Activated CD8-positive, alpha-beta T cell treated with anti-CD3 and anti-CD28 coated beads, Interleukin-2, amount 10 ng/mL, durations not matched to agents 7 days and 5 days (primary cell): ENCODE measurements at regions of chr1 and their contacts with region 1.

Region 1: GRCh38 chr1:227563324-227564201 is at the start of gene ZNF678:
- DNase-seq: peak; percentile 90
- ATAC-seq: peak; percentile 91
- H3K4me3 Mint-ChIP-seq: peak within 1 kb of the TSS; percentile 93
- H3K27ac Mint-ChIP-seq: peak within 1 kb of the TSS; percentile 86
- H3K4me1 Mint-ChIP-seq: peaks cover 18% of the 10 kb centered on the region
- H3K27me3 Mint-ChIP-seq: peaks cover 21% of the 10 kb centered on the region
- total RNA-seq, gene ZNF678: 4.1 to 5.2 TPM

Region 2: DNA sequence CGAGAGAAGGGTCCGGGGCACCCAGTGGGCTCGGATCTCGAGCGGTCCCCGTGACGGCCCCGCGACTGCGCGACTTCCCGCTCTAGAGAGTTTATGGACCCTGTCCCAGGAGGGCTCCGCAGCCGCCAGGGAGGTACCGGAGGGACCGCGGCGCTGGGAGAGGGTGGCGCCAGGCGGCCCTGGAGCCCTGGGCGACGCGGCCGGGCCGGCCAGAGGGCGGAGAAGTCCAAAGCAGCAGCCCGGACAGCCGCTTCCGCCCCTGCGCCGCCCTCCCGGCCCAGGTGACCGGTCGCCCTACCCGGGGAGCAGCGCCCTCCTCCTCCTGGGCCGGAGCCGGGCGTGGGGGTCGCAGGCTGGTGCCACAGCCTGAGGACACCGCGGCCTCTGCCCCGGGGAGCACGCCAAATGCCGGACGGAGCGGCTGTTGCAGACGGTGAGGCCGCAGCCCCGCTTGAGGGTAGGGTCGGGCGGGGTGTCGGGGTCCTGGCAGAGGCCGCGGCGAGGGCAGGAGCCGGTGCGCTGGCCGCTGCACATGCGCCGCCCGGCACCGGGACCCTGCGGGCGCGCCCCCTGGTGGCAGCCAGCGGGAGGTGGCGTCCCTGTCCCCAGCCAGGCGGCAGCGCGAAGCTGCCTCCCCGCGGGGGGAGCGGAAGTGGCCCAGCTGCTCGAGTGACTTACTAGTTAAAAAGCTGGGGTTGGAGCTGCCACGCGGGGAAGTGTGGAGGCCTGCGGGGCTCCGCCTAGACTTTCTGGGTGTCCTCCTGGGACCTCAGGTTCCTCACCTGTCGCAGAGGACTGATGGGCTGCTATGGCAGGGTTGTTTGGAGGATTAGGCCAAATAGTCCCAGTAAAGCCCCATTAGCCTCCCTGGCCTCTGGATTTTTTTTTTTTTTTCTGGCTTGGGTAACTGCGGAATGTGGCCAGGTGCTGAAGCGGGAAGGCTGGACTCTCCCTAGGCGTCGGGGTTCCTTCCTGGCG is 21.1 kb before region 1 on chr1:
- CTCF ChIA-PET with region 1: interaction called, 20 read pairs
- POLR2A ChIA-PET with region 1: interaction called, 3 read pairs
- DNase-seq: peak; percentile 91
- ATAC-seq: peak; percentile 99
- H3K4me3 Mint-ChIP-seq: peak overlapping the region; percentile 36
- H3K27ac Mint-ChIP-seq: peak overlapping the region; percentile 63
- H3K4me1 Mint-ChIP-seq: peaks cover 4% of the 10 kb centered on the region
- H3K27me3 Mint-ChIP-seq: no peaks in the 10 kb centered on the region